GM12878 (cell line): ENCODE measurements at regions of chr9 and their contacts with region 1.

Region 1: DNA sequence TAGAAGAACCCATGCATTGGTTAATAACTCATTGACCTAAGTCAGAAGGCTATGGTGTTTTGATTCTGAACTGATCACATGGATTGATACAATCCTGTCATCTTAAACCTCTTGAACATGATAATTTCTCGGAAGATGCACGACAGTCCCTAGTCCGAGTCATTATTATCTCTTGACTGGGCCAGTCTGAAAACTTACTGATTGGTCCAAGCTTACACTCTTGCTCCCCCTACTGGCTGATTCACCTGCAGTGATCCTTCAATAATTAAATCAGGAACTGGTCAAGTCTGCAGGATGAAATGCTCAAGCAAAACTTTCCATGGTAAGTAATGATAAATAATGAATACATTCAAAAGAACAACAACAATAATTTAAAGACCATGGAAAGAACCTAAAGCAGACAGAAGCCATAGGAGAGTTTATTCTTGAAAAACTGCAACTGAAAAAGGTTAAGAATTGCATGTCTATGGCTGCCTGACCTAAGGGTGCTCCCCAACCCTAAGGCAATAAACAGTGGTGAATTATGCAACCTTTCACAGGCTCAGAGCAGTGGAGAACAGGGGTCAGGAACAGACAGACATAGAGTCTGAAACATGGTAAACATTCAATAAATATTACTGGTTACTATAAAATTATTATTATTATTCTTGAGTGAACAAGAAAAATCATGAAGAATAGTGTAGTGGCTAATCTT is 79.3 kb downstream of the BRINP1 start:
- DNase-seq: no peak
- ATAC-seq: peak; percentile 84
- H3K4me3 ChIP-seq: no peak overlapping the region
- H3K27ac ChIP-seq: no peak overlapping the region
- H3K4me1 ChIP-seq: no peaks in the 10 kb centered on the region
- H3K27me3 ChIP-seq: no peaks in the 10 kb centered on the region
- CTCF ChIP-seq: peak; percentile 68 to 79 (median 74); a peak in 5 of 6 replicates
- EP300 ChIP-seq: no peak
- POLR2A ChIP-seq: no peak
- RAD21 ChIP-seq: peak; percentile 77

Region 2: DNA sequence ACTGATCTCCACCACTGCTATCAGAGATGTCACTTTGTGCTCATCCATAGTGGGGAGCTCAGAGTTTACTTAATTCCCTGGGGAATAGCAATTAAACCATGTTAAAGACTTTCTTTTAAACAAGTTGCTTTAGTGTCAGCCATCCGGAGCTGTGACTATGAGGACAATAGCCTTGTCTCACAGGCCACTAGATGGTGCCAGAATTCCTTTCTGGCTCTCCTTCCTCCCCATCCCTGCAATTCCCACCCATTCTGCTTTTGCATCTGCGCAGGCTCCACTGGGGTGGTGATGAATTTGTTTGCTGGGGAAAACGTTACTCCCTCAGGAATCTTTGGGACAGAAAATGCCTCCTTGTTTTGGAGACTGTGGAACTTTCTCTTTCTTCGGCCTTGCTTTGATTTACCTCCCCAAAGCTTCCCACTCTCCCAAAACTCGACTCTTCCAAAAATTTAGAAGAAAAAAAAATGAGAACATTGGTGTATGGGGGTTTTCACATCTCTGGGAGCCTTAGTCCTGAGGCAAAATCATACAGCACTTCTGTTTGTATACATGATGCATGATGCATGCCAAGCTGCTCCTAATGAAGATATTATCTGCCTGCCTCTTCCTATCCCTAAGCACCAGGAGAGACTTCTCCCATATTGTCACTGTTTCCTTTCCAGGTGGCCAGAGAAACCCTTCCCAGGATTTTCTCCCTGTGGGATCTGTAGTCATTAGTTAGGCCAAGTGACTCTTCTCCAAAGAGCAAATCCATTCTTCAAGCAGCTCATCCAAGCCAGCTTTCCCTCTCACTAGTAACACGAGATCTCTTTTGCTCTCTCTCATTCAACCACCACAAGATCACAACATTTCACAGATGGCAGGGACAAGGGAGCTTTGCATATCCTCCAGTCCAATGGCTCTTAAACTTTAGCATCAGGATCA is 1119.6 kb before region 1 on chr9:
- CTCF ChIA-PET with region 1: no interaction called
- POLR2A ChIA-PET with region 1: no interaction called
- RAD21 ChIA-PET with region 1: interaction called, 3 read pairs
- SMC1A ChIA-PET with region 1: no interaction called
- in situ Hi-C with region 1: no loop called
- intact Hi-C with region 1: loop called (anchors 2 kb)
- DNase-seq: no peak
- ATAC-seq: peak; percentile 68
- H3K4me3 ChIP-seq: no peak overlapping the region
- H3K27ac ChIP-seq: no peak overlapping the region
- H3K4me1 ChIP-seq: no peaks in the 10 kb centered on the region
- H3K27me3 ChIP-seq: no peaks in the 10 kb centered on the region
- CTCF ChIP-seq: peak; percentile 50 to 65 (median 63)
- EP300 ChIP-seq: no peak
- POLR2A ChIP-seq: no peak
- RAD21 ChIP-seq: peak; percentile 46

Region 3: DNA sequence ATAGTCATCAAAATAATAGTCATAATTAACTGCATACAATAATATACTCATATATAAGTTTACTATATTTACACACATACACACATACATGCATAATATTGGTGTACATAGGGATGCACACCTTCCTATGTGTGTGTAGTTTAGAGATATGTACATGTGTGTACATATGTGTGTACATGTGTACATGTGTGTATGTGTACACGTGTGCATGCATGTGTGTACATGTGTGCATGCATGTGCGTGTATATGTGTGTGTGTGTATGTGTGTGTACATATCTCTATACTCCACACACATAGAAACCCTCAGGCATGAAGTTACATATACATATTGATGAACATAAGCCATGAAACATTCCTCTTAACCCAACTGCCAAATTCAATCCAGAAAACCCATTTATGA is 1037.9 kb before region 1 on chr9:
- CTCF ChIA-PET with region 1: no interaction called
- POLR2A ChIA-PET with region 1: no interaction called
- RAD21 ChIA-PET with region 1: no interaction called
- SMC1A ChIA-PET with region 1: no interaction called
- in situ Hi-C with region 1: no loop called
- intact Hi-C with region 1: no loop called
- DNase-seq: no peak
- ATAC-seq: no peak
- H3K4me3 ChIP-seq: no peak overlapping the region
- H3K27ac ChIP-seq: no peak overlapping the region
- H3K4me1 ChIP-seq: no peaks in the 10 kb centered on the region
- H3K27me3 ChIP-seq: no peaks in the 10 kb centered on the region
- CTCF ChIP-seq: no peak
- EP300 ChIP-seq: no peak
- POLR2A ChIP-seq: no peak
- RAD21 ChIP-seq: no peak

Region 4: GRCh38 chr9:118522093-118523028 is 767.5 kb before region 1 on chr9:
- CTCF ChIA-PET with region 1: interaction called, 6 read pairs
- POLR2A ChIA-PET with region 1: no interaction called
- RAD21 ChIA-PET with region 1: no interaction called
- SMC1A ChIA-PET with region 1: no interaction called
- in situ Hi-C with region 1: loop called (anchors 10 kb)
- intact Hi-C with region 1: loop called (anchors 1 kb)
- DNase-seq: peak; percentile 34
- ATAC-seq: peak; percentile 100
- H3K4me3 ChIP-seq: no peak overlapping the region
- H3K27ac ChIP-seq: no peak overlapping the region
- H3K4me1 ChIP-seq: no peaks in the 10 kb centered on the region
- H3K27me3 ChIP-seq: no peaks in the 10 kb centered on the region
- CTCF ChIP-seq: peak; percentile 63 to 84 (median 71)
- EP300 ChIP-seq: no peak
- POLR2A ChIP-seq: no peak
- RAD21 ChIP-seq: peak; percentile 73

Region 5: DNA sequence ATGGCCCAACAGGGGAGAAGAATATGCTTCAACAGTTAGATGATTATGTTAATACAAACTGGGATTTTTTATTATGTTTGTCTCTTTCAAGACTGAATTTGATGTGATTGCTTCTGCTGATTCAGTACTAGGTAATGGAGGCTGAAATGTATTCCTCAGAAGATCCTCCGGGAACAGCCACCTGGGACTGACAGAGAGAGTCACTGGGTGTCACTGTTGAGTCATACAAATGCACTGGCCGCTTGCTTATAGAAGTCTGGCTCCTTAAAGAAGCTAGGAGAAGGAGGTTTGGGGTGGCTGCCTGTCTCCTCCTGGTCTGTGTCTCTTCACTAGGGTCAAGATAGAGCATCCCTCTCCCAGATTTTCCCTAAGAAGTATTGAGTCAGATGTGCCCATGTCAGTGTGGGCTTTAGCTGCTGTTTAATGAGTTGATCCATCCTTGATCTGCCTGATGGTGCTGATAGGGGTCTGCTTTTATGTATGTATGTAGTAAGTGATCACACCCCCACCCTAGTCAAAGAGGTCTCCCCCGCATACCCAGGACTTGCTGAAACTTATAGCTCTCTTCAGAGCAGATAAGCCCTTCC is 694.1 kb before region 1 on chr9:
- CTCF ChIA-PET with region 1: no interaction called
- POLR2A ChIA-PET with region 1: no interaction called
- RAD21 ChIA-PET with region 1: no interaction called
- SMC1A ChIA-PET with region 1: no interaction called
- in situ Hi-C with region 1: no loop called
- intact Hi-C with region 1: loop called (anchors 5 kb)
- DNase-seq: no peak
- ATAC-seq: peak; percentile 71
- H3K4me3 ChIP-seq: no peak overlapping the region
- H3K27ac ChIP-seq: no peak overlapping the region
- H3K4me1 ChIP-seq: no peaks in the 10 kb centered on the region
- H3K27me3 ChIP-seq: no peaks in the 10 kb centered on the region
- CTCF ChIP-seq: peak in 2 of 3 experiments; percentile 23 to 34; a peak in 3 of 6 replicates
- EP300 ChIP-seq: no peak
- POLR2A ChIP-seq: no peak
- RAD21 ChIP-seq: peak; percentile 30; the same call in 1 of the 2 replicates

Region 6: DNA sequence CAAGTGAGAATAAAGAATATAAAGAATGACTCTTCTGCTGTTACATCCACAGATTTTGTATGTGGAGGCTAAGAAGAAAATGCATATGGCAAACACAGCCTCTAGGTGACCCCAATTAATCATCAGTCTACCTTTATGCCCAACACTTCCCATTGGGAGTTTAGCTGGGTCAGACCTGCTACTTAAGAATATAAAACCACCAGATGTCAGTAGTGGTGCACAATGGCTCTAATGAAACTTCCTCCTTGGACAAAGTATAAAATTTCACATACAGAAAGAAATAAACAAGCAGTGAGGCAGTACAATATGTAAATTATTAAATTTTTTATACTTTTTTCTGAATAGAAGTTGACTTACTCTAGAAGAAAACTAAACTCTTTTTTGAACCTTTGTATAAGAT is 460.6 kb before region 1 on chr9:
- CTCF ChIA-PET with region 1: no interaction called
- POLR2A ChIA-PET with region 1: no interaction called
- RAD21 ChIA-PET with region 1: no interaction called
- SMC1A ChIA-PET with region 1: no interaction called
- in situ Hi-C with region 1: no loop called
- intact Hi-C with region 1: loop called (anchors 10 kb)
- DNase-seq: no peak
- ATAC-seq: no peak
- H3K4me3 ChIP-seq: no peak overlapping the region
- H3K27ac ChIP-seq: no peak overlapping the region
- H3K4me1 ChIP-seq: no peaks in the 10 kb centered on the region
- H3K27me3 ChIP-seq: no peaks in the 10 kb centered on the region
- CTCF ChIP-seq: no peak
- EP300 ChIP-seq: no peak
- POLR2A ChIP-seq: no peak
- RAD21 ChIP-seq: no peak